ENCODE measurements at regions of chr9 and their contacts with region 1.

Region 1: GRCh38 chr9:112333639-112334431 is 416 bp upstream of the PTBP3 start:
- DNase-seq: peak; percentile 94
- H3K4me3 ChIP-seq: peak overlapping the region; percentile 97 to 99 (median 98)
- H3K27ac ChIP-seq: peak overlapping the region; percentile 93
- H3K4me1 ChIP-seq: peaks cover 18% of the 10 kb centered on the region
- H3K27me3 ChIP-seq: no peaks in the 10 kb centered on the region
- CTCF ChIP-seq: peak in 1 of 2 donors; percentile 58

Region 2: DNA sequence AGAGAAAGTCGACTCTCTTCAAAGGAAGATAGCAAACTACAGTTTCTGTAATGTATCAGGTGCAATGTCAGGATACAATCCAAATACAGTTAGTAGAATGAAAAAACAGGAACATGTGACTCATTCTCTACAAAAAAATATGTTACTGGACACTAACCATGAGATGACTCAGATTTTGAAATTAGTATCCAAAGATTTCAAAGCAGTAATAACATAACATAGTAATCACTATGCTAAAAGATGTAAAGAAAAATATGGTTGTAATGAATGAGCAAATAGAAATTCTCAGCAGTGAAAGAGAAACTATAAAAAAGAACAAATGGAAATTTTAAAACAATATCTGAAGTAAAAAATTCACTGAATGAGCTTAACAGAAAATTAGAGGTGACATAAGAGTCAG is 581.4 kb before region 1 on chr9:
- CTCF ChIA-PET with region 1: no interaction called
- dilution Hi-C with region 1: no loop called
- in situ Hi-C with region 1: no loop called
- intact Hi-C with region 1: no loop called
- DNase-seq: peak; percentile 63
- H3K4me3 ChIP-seq: no peak overlapping the region
- H3K27ac ChIP-seq: no peak overlapping the region
- H3K4me1 ChIP-seq: no peaks in the 10 kb centered on the region
- H3K27me3 ChIP-seq: no peaks in the 10 kb centered on the region
- CTCF ChIP-seq: no peak

Region 3: DNA sequence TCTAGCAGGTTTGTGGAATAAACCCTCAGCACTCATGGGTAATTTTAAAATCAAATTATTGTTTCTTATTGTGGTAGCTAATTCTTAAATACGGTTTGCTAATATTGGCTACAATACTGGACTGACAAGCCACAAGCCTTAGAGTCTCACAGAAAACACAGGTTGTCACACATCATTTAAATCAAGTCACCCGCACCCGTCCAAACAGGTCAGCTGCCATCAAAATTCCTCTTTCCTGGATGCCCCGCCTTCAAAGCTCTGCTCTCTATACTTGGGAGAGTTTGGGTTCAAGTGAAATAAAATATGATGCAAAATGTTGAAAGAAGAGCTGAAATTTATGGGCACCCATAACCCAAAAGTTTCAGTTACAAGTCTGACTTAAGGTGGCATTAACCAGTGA is 146.4 kb before region 1 on chr9:
- CTCF ChIA-PET with region 1: interaction called, 33 read pairs
- dilution Hi-C with region 1: no loop called
- in situ Hi-C with region 1: no loop called
- intact Hi-C with region 1: no loop called
- DNase-seq: no peak
- H3K4me3 ChIP-seq: no peak overlapping the region
- H3K27ac ChIP-seq: no peak overlapping the region
- H3K4me1 ChIP-seq: peaks cover 6% of the 10 kb centered on the region
- H3K27me3 ChIP-seq: no peaks in the 10 kb centered on the region
- CTCF ChIP-seq: no peak

Region 4: GRCh38 chr9:112249277-112249676 is 84.6 kb before region 1 on chr9:
- CTCF ChIA-PET with region 1: no interaction called
- dilution Hi-C with region 1: no loop called
- in situ Hi-C with region 1: no loop called
- intact Hi-C with region 1: loop called (anchors 5 kb)
- DNase-seq: peak; percentile 70
- H3K4me3 ChIP-seq: peak overlapping the region in 2 of 3 experiments; percentile 34 to 55
- H3K27ac ChIP-seq: peak overlapping the region; percentile 95
- H3K4me1 ChIP-seq: peaks cover 23% of the 10 kb centered on the region
- H3K27me3 ChIP-seq: no peaks in the 10 kb centered on the region
- CTCF ChIP-seq: no peak

Region 5: GRCh38 chr9:112312139-112312538 is 21.7 kb before region 1 on chr9:
- CTCF ChIA-PET with region 1: no interaction called
- dilution Hi-C with region 1: no loop called
- in situ Hi-C with region 1: no loop called
- intact Hi-C with region 1: loop called (anchors 2 kb)
- DNase-seq: no peak
- H3K4me3 ChIP-seq: no peak overlapping the region
- H3K27ac ChIP-seq: no peak overlapping the region
- H3K4me1 ChIP-seq: no peaks in the 10 kb centered on the region
- H3K27me3 ChIP-seq: no peaks in the 10 kb centered on the region
- CTCF ChIP-seq: no peak

Region 6: GRCh38 chr9:112433499-112434392 is 99.9 kb after region 1 on chr9:
- CTCF ChIA-PET with region 1: no interaction called
- dilution Hi-C with region 1: no loop called
- in situ Hi-C with region 1: no loop called
- intact Hi-C with region 1: no loop called
- DNase-seq: no peak
- H3K4me3 ChIP-seq: no peak overlapping the region
- H3K27ac ChIP-seq: no peak overlapping the region
- H3K4me1 ChIP-seq: no peaks in the 10 kb centered on the region
- H3K27me3 ChIP-seq: no peaks in the 10 kb centered on the region
- CTCF ChIP-seq: no peak